ENCODE measurements at regions of chr5 and their contacts with region 1.

Region 1: DNA sequence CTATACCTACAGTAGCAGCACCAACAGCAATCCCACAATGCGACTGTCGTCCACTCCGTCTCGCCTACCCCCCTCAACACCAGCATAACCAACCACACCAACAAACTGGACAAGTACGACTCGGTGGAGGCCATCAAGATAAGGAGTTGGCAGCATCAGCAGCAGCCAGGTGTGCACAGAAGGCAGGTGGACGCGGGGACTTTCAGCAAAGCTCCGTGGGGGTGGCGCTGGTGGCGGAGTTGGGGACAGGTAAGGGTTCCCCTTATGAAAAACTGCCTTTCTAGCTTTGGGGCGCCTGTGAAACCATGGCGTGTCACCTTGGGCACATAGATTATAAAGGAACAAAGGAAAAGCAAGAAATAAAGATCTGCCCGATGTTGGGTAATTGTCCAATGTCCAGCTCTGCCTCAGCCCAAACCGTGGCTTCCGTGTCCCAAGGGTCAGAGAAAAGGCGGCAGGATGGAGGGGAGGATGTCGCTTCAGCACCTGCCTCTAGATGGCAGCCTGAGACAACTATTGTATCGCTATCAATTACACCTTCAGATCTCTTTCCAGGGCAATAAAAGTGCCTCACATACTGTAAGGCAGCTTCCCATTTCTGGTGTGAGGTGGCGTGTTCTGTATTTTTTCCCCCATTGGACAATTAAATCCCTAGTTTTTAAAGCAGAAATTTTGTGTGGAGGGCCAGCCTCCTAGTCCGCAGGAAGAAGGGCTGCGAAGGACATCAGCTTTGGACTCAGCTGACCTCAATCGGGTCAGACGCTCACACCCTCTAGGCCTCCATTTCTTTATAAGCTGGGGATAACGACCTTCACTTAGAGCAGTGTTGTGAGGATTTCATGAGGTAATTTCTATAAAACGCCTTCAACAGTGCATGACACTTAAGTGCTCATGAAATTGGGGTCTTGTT is 58.8 kb downstream of the MTRR start:
- DNase-seq: no peak
- H3K4me3 ChIP-seq: no peak overlapping the region
- H3K27me3 ChIP-seq: no peaks in the 10 kb centered on the region
- CTCF ChIP-seq: peak; percentile 84

Region 2: DNA sequence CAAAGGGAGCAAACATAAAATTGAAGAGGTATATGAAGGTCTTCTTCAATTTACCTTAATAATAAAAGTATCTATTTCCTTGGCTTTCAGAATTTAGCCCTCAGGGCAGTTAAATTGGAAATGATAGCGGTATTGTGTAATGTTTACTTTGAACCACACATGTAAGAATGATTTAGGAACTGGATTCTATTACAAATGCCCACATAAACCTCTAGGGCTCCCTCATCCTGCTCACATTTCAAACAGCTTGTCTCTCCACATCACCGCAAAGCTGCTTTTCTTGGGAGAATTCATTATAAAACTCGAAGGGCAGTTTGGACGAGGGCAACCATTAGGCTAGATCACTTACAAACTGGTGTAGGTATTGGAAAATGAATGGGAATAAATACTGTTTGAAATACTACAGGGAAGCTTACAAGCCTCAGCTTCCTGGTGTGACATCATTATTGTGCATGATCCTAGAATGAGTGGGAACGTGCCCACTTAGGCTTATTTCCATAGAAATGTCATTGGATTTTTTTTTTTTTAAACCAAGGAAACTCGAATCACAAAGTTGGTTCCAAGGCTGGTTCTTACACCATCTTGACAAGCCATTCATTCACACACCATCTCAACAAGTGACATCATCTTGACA is 11.4 kb before region 1 on chr5:
- CTCF ChIA-PET with region 1: interaction called, 16 read pairs
- POLR2A ChIA-PET with region 1: no interaction called
- DNase-seq: no peak
- H3K4me3 ChIP-seq: no peak overlapping the region
- H3K27me3 ChIP-seq: no peaks in the 10 kb centered on the region
- CTCF ChIP-seq: 0 out of 2 replicates have a peak, but pooled peaks have one; percentile 2

Region 3: GRCh38 chr5:7941692-7942091 is 14.0 kb after region 1 on chr5:
- CTCF ChIA-PET with region 1: interaction called, 26 read pairs
- POLR2A ChIA-PET with region 1: no interaction called
- DNase-seq: no peak
- H3K4me3 ChIP-seq: no peak overlapping the region
- H3K27me3 ChIP-seq: no peaks in the 10 kb centered on the region
- CTCF ChIP-seq: no peak